Panc1 (cell line): ENCODE measurements at regions of chr10 and their contacts with region 1.

Region 1: GRCh38 chr10:128704716-128705115 is 578.5 kb upstream of the MKI67 start:
- DNase-seq: peak; percentile 52
- ATAC-seq: no peak
- H3K4me3 ChIP-seq: no peak overlapping the region
- H3K27ac ChIP-seq: no peak overlapping the region
- H3K4me1 ChIP-seq: no peaks in the 10 kb centered on the region
- H3K27me3 ChIP-seq: peaks cover 2% of the 10 kb centered on the region; the same call in 1 of the 2 replicates
- CTCF ChIP-seq: no peak

Region 2: DNA sequence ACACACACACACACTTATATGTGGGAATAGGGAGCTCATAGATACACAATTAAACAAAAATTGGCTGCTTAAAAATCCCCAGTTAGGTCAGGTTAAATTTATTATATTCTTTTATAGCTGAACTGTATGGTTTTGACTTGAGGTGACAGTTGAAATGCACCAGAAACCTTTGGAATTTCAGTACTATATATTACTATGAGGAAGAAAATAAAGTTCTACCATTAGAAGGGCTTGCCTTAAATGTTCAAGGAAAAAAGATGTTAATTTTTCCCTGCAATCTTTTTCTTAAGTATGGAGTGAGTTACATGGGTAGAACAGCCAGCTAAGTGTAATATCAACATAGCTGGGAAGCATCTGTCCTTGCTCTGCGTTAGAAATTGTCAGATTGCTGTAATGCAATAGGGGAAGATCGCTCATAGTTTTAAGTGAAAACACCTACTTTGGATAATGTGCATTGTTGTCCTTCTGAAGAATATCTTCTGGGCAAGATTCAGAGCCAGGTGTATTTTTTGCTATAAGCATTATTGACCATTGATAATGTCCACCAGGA is 162.7 kb before region 1 on chr10:
- CTCF ChIA-PET with region 1: interaction called, 11 read pairs
- POLR2A ChIA-PET with region 1: no interaction called
- in situ Hi-C with region 1: no loop called
- intact Hi-C with region 1: no loop called
- DNase-seq: no peak
- ATAC-seq: no peak
- H3K4me3 ChIP-seq: no peak overlapping the region
- H3K27ac ChIP-seq: no peak overlapping the region
- H3K4me1 ChIP-seq: no peaks in the 10 kb centered on the region; the same call in 1 of the 2 replicates
- H3K27me3 ChIP-seq: peaks cover 44% of the 10 kb centered on the region
- CTCF ChIP-seq: no peak